ENCODE measurements at regions of chr16 and their contacts with region 1.

Region 1: GRCh38 chr16:19196871-19197270 is 28.8 kb downstream of the SYT17 start:
- DNase-seq: no peak
- ATAC-seq: no peak
- H3K4me3 ChIP-seq: no peak overlapping the region
- H3K27ac ChIP-seq: no peak overlapping the region
- H3K4me1 ChIP-seq: no peaks in the 10 kb centered on the region
- H3K27me3 ChIP-seq: no peaks in the 10 kb centered on the region
- CTCF ChIP-seq: no peak

Region 2: GRCh38 chr16:19330841-19331397 is 134.0 kb after region 1 on chr16:
- intact Hi-C with region 1: loop called in 1 of 2 experiments (anchors 10 kb)
- DNase-seq: no peak
- ATAC-seq: no peak
- H3K4me3 ChIP-seq: no peak overlapping the region
- H3K27ac ChIP-seq: no peak overlapping the region
- H3K4me1 ChIP-seq: no peaks in the 10 kb centered on the region
- H3K27me3 ChIP-seq: no peaks in the 10 kb centered on the region
- CTCF ChIP-seq: no peak